Left ventricle myocardium inferior (tissue), 1 donor: ENCODE measurements at regions of chr16 and their contacts with region 1.

Region 1: GRCh38 chr16:56203052-56203451 is 11.8 kb downstream of the GNAO1 start:
- DNase-seq: no peak
- H3K4me3 ChIP-seq: no peak overlapping the region
- H3K27ac ChIP-seq: no peak overlapping the region
- H3K4me1 ChIP-seq: peaks cover 21% of the 10 kb centered on the region
- H3K27me3 ChIP-seq: no peaks in the 10 kb centered on the region
- CTCF ChIP-seq: peak; percentile 48

Region 2: DNA sequence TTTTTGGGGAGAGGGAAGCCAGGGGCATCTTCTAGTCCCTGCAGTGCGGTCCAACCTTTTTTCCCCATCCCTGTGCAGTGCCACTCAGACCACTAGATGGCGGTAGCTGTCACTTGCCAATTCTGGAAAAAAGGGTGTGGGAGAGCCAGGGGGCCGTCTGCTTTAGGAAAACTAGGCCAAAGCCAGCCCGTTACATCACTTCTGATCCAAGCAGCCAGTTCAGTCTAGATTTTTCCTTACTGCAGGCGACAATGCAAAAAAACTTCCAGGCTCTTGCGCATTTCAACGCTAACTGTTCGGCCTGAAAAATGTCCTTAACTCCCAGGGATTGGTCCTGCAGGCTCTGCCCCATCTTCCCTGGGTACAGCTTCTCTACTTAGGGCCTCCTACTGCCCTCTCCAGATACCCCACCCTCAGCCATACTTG is 258.7 kb before region 1 on chr16:
- intact Hi-C with region 1: loop called (anchors 10 kb)
- DNase-seq: peak; percentile 61
- H3K4me3 ChIP-seq: no peak overlapping the region
- H3K27ac ChIP-seq: peak overlapping the region; percentile 38
- H3K4me1 ChIP-seq: peaks cover 3% of the 10 kb centered on the region
- H3K27me3 ChIP-seq: peaks cover 4% of the 10 kb centered on the region
- CTCF ChIP-seq: peak; percentile 96